H1 (cell line): ENCODE measurements at regions of chr4 and their contacts with region 1.

Region 1: DNA sequence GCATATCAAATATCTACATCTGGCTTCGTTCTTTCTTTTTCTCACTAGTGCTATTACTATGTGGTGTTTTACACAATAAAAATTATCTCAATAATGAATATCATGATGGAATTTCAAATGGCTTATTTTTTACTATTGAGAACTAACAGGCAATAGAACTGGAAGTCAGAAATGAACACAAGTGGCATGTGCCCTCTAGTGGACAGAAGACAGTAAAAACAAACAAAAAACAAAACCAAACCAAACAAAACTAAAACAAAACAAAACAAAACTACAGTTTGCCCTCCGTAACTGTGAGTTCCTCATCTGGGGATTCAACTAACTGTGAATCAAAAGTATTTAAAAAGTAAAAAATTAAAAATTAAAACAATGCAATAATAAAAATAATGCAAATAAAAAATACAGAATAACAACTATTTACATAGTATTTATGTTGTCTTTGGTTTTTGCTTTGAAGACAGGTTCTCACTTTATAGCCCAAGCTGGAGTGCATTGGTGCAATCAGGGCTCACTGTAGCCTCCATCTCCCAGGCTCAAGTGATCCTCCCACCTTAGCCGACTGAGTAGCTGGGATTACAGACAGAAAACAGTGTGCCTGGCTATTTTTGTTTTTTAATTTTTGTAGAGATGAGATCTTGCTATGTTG is 195.6 kb upstream of the TACR3 start:
- DNase-seq: no peak
- H3K4me3 ChIP-seq: no peak overlapping the region
- H3K27ac ChIP-seq: no peak overlapping the region
- H3K4me1 ChIP-seq: no peaks in the 10 kb centered on the region
- H3K27me3 ChIP-seq: no peaks in the 10 kb centered on the region
- CTCF ChIP-seq: peak in 2 of 3 experiments; percentile 37 to 41; a peak in 2 of 4 replicates
- EP300 ChIP-seq: no peak
- POLR2A ChIP-seq: no peak
- RAD21 ChIP-seq: peak; percentile 61 to 63

Region 2: DNA sequence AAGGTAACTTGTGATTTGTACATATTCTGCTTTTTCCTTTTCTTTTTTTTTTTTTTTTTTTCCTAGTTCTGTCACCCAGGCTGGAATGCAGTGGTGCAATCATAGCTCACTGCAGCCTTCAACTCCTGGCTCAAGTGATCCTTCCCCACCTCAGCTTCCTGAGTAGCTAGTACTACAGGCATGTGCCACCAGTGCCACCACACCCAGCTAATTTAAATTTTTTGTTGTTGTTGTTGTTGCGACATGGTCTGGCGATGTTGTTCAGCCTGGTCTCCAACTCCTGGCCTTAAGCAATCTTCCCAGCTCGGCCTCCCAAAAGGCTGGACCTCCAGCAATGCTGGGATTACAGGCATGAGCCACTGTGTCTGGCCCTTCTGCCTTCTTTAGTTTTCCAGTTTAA is 194.1 kb before region 1 on chr4:
- CTCF ChIA-PET with region 1: no interaction called
- POLR2A ChIA-PET with region 1: no interaction called
- DNase-seq: no peak
- H3K4me3 ChIP-seq: no peak overlapping the region
- H3K27ac ChIP-seq: no peak overlapping the region
- H3K4me1 ChIP-seq: no peaks in the 10 kb centered on the region; a peak in 2 of 7 replicates
- H3K27me3 ChIP-seq: no peaks in the 10 kb centered on the region
- CTCF ChIP-seq: no peak
- EP300 ChIP-seq: no peak
- POLR2A ChIP-seq: no peak
- RAD21 ChIP-seq: no peak

Region 3: GRCh38 chr4:103802768-103803167 is 112.6 kb before region 1 on chr4:
- CTCF ChIA-PET with region 1: interaction called, 11 read pairs
- POLR2A ChIA-PET with region 1: no interaction called
- DNase-seq: no peak
- H3K4me3 ChIP-seq: no peak overlapping the region
- H3K27ac ChIP-seq: no peak overlapping the region
- H3K4me1 ChIP-seq: no peaks in the 10 kb centered on the region
- H3K27me3 ChIP-seq: no peaks in the 10 kb centered on the region
- CTCF ChIP-seq: peak in 2 of 3 experiments; percentile 31 to 49; a peak in 3 of 4 replicates
- EP300 ChIP-seq: no peak
- POLR2A ChIP-seq: no peak
- RAD21 ChIP-seq: peak; percentile 24 to 43; a peak in 3 of 4 replicates

Region 4: GRCh38 chr4:103904123-103904522 is 11.2 kb before region 1 on chr4:
- CTCF ChIA-PET with region 1: interaction called, 14 read pairs
- POLR2A ChIA-PET with region 1: no interaction called
- DNase-seq: no peak
- H3K4me3 ChIP-seq: no peak overlapping the region
- H3K27ac ChIP-seq: no peak overlapping the region
- H3K4me1 ChIP-seq: no peaks in the 10 kb centered on the region
- H3K27me3 ChIP-seq: no peaks in the 10 kb centered on the region
- CTCF ChIP-seq: no peak
- EP300 ChIP-seq: no peak
- POLR2A ChIP-seq: no peak
- RAD21 ChIP-seq: no peak

Region 5: GRCh38 chr4:104279744-104280143 is 364.4 kb after region 1 on chr4:
- CTCF ChIA-PET with region 1: no interaction called
- POLR2A ChIA-PET with region 1: no interaction called
- DNase-seq: no peak
- H3K4me3 ChIP-seq: no peak overlapping the region
- H3K27ac ChIP-seq: no peak overlapping the region
- H3K4me1 ChIP-seq: no peaks in the 10 kb centered on the region
- H3K27me3 ChIP-seq: no peaks in the 10 kb centered on the region
- CTCF ChIP-seq: no peak
- EP300 ChIP-seq: no peak
- POLR2A ChIP-seq: no peak
- RAD21 ChIP-seq: no peak